Ovary (tissue), 10 donors: ENCODE measurements at regions of chr5 and their contacts with region 1.

Region 1: GRCh38 chr5:172984243-172984953 is 827 bp downstream of the ATP6V0E1 start:
- DNase-seq: peak; percentile 53 to 77 (median 59)
- H3K4me3 ChIP-seq: peak overlapping the region; percentile 55
- H3K27ac ChIP-seq: peak overlapping the region; percentile 88 to 89
- H3K4me1 ChIP-seq: peaks cover 2% of the 10 kb centered on the region
- H3K27me3 ChIP-seq: no peaks in the 10 kb centered on the region
- CTCF ChIP-seq: peak in 1 of 3 donors; percentile 33
- EP300 ChIP-seq: no peak
- POLR2A ChIP-seq: no peak

Region 2: GRCh38 chr5:171681677-171682076 is 1302.7 kb before region 1 on chr5:
- intact Hi-C with region 1: no loop called
- DNase-seq: no peak
- H3K4me3 ChIP-seq: no peak overlapping the region
- H3K27ac ChIP-seq: no peak overlapping the region
- H3K4me1 ChIP-seq: no peaks in the 10 kb centered on the region
- H3K27me3 ChIP-seq: no peaks in the 10 kb centered on the region
- CTCF ChIP-seq: no peak
- EP300 ChIP-seq: no peak
- POLR2A ChIP-seq: no peak

Region 3: DNA sequence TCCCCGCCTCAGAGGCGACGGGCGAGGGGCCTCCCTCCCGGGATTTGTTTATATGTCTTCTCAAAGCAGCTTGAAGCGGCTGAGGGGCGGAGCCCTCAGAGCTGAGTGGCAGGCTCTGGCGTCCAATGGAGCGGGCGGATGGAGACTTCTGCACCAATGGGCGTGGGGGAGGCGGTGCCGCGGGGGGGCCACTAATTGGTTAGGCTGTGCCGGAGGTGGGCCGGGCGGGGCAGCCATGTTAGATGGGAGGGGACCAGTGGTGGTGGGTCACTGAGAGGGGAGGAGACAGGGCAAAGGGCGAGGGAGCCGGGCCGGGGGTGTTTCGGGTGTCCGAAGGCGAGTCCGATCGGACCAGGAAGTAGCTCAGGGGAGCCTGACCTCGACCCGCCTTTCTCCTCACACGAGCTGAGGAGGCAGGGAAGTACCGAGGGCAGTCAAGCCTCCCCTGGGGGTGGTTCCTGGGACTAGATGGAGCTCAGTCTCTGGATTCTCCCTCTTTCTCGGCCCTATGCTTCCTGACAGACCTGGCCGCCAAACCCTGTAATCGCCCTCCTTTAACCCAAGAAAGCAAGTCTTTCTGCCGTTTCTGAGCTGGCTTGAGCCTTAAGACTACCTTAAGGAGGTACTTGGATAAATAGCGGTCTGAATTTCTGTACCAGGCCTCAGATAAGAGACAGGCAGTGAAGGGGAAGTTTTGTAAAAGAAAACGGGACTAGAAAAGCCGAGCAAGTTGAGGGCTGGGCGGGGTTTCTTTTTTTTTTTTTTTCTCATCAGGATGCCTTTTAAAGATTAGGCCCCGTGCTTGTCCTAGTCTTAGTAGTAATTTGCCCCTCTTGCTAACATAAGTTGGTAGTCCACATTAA is 72.9 kb after region 1 on chr5:
- intact Hi-C with region 1: loop called in 2 of 4 experiments (anchors 5 to 10 kb)
- DNase-seq: peak; percentile 98 to 99 (median 99)
- H3K4me3 ChIP-seq: peak overlapping the region; percentile 98
- H3K27ac ChIP-seq: peak overlapping the region; percentile 99 to 100
- H3K4me1 ChIP-seq: no peaks in the 10 kb centered on the region
- H3K27me3 ChIP-seq: no peaks in the 10 kb centered on the region
- CTCF ChIP-seq: no peak
- EP300 ChIP-seq: no peak
- POLR2A ChIP-seq: no peak

Region 4: DNA sequence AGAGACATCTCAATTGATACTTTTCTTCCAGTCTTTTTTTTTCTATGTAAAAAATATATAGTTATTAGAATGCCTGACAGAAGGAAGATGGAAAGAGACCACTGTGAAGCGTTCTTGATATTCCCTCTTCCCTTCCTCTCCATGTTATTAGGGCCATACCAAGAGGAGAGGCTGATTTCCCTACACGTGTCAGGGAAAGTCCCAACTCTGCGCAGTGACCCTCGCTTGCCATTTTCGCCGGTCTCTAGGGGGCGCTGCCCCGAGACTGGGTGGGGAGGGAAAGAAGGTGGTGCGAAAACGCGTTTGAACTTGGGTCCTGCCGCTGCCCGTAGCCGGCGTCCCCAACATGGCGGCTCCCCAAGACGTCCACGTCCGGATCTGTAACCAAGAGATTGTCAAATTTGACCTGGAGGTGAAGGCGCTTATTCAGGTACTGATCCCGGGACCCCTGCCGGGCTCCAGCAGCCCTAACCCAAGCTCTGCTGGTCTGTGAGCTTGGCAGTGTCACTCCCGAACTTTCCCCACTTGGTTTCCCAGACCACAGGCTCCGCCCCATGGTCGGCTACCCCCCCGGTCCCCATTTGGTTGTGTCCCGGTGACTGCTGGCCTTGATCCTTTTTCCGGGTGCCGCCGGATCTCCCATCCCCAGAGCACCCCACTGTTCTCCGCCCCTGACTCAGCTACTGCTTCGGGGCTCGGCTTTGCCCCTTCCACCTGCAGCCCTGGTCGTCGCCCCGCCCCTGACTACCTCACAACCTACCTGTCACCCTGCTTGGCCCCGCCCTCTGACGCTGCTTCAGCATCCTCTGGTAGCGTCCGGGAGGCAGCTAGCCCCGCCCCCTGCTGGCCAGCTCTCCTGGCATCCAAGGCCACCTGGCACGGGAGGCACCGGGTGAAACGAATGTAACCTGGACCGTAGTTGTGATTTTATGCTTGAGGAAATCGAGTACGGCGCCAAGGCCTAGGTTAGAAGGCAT is 160.1 kb after region 1 on chr5 and contains the start of gene BNIP1:
- intact Hi-C with region 1: loop called in 3 of 4 experiments (anchors 2 to 10 kb)
- DNase-seq: peak; percentile 90 to 97 (median 95)
- H3K4me3 ChIP-seq: peak within 1 kb of the TSS; percentile 74
- H3K27ac ChIP-seq: peak within 1 kb of the TSS; percentile 7 to 51
- H3K4me1 ChIP-seq: peaks cover 1% of the 10 kb centered on the region
- H3K27me3 ChIP-seq: no peaks in the 10 kb centered on the region
- CTCF ChIP-seq: peak; percentile 84 to 96 (median 91)
- EP300 ChIP-seq: no peak
- POLR2A ChIP-seq: peak; percentile 39
- total RNA-seq, gene BNIP1: 8.3 to 17.6 (median 9.5) TPM

Region 5: DNA sequence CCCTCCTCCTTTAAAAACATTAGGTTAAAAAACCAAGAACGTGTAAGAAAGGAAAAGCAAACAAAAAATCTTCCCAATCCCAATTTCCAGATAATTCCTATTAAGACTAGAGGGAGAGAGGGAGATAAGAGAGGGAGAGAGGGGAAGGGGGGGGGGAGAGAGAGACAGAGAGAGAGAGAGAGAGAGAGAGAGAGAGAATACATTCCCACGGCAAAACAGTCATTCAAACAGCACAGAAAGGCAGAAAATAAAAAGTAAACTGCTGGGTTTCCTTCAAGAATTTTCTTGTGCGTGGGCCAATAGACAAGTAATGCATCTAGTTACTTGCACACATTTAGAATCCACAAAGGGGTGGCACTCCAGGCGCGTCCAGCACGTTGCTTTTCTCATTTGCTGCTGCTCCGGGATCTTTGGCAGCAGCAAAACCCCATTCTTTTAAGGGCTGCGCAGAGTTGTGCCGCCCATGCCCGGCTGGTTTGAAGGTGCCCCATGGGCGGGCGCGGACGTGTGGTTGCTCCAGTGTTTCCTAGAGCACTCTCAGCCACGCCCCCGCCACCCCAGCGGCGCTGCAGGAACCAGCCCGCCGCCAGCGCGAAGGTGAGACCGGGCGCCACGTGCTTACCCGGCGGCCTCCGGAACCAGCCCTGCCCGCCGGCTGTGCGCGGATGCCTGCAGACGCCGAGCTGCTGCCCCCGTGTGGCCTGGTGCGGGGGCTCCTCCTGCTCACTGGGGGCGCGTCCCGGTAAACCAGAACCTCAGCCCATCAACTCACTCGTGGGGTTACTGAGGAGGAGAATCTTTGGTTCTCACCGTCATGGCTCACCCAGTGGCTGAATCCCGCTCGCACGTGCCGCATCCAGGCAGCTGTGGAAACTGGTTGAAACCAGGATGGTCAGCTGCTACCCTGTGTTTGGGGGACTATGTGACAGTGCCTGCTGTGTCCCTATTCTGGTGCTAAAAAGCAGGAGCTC is 299.2 kb after region 1 on chr5:
- intact Hi-C with region 1: loop called in 3 of 4 experiments (anchors 10 kb)
- DNase-seq: peak; percentile 64 to 85 (median 71)
- H3K4me3 ChIP-seq: no peak overlapping the region
- H3K27ac ChIP-seq: no peak overlapping the region
- H3K4me1 ChIP-seq: no peaks in the 10 kb centered on the region
- H3K27me3 ChIP-seq: no peaks in the 10 kb centered on the region
- CTCF ChIP-seq: peak in 2 of 3 donors; percentile 56 to 77
- EP300 ChIP-seq: no peak
- POLR2A ChIP-seq: no peak

Region 6: GRCh38 chr5:173293817-173294672 is 309.6 kb after region 1 on chr5:
- intact Hi-C with region 1: loop called (anchors 5 to 10 kb)
- DNase-seq: peak; percentile 68 to 87 (median 80)
- H3K4me3 ChIP-seq: no peak overlapping the region
- H3K27ac ChIP-seq: no peak overlapping the region
- H3K4me1 ChIP-seq: peaks cover 2% of the 10 kb centered on the region
- H3K27me3 ChIP-seq: no peaks in the 10 kb centered on the region
- CTCF ChIP-seq: peak; percentile 67 to 89 (median 82)
- EP300 ChIP-seq: no peak
- POLR2A ChIP-seq: no peak